ENCODE measurements at regions of chr2 and their contacts with region 1.

Region 1: GRCh38 chr2:208280933-208281332 is 14.9 kb downstream of the PIKFYVE start:
- DNase-seq: no peak
- ATAC-seq: no peak
- H3K4me3 ChIP-seq: no peak overlapping the region
- H3K27ac ChIP-seq: no peak overlapping the region
- H3K4me1 ChIP-seq: peaks cover 0 to 14% (median 5%) of the 10 kb centered on the region in 12 donors
- H3K27me3 ChIP-seq: no peaks in the 10 kb centered on the region
- CTCF ChIP-seq: no peak
- POLR2A ChIP-seq: no peak

Region 2: GRCh38 chr2:208092093-208092832 is 188.7 kb before region 1 on chr2:
- intact Hi-C with region 1: no loop called
- DNase-seq: no peak
- ATAC-seq: no peak
- H3K4me3 ChIP-seq: no peak overlapping the region
- H3K27ac ChIP-seq: no peak overlapping the region
- H3K4me1 ChIP-seq: peaks cover 0 to 4% (median 0%) of the 10 kb centered on the region in 12 donors
- H3K27me3 ChIP-seq: no peaks in the 10 kb centered on the region
- CTCF ChIP-seq: no peak
- POLR2A ChIP-seq: no peak

Region 3: GRCh38 chr2:208334230-208334629 is 53.3 kb after region 1 on chr2:
- intact Hi-C with region 1: loop called in 1 of 10 experiments (anchors 10 kb)
- DNase-seq: no peak
- ATAC-seq: no peak
- H3K4me3 ChIP-seq: no peak overlapping the region
- H3K27ac ChIP-seq: no peak overlapping the region
- H3K4me1 ChIP-seq: no peaks in the 10 kb centered on the region
- H3K27me3 ChIP-seq: no peaks in the 10 kb centered on the region
- CTCF ChIP-seq: no peak
- POLR2A ChIP-seq: no peak